ENCODE measurements at regions of chr11 and their contacts with region 1.

Region 1: GRCh38 chr11:14249121-14249963 is 109.6 kb downstream of the RRAS2 start:
- DNase-seq: peak; percentile 42
- H3K4me3 Mint-ChIP-seq: peak overlapping the region; percentile 31
- H3K27ac Mint-ChIP-seq: no peak overlapping the region
- H3K4me1 Mint-ChIP-seq: peaks cover 21% of the 10 kb centered on the region
- H3K27me3 Mint-ChIP-seq: peaks cover 6% of the 10 kb centered on the region

Region 2: DNA sequence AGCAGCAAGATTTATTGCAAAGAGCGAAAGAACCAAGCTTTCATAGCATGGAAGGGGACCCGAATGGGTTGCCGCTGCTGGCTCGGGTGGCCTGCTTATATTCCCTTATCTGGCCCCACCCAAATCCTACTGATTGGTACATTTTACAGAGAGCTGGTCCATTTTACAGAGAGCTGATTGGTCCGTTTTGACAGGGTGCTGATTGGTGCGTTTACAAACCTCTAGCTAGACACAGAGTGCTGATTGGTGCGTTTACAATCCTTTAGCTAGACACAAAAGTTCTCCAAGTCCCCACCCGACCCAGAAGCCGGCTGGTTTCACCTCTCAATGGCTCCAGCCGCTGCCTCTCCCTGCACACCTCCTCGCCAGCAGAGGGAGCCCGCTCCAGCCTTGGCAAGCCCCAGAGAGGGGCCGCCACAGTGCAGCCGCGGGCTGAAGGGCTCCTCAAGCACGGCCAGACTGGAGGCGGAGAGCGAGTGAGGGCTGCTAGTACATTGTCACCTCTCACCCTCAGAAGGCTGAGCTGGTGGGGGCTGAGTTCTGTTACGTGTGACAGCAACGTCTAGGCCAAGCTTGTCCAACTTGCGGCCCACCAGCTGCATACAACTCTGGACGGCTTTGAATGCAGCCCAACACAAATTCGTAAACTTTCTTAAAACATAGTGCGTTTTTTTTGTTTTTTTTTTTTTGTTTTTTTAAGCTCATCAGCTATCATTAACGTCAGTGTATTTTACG is 762.2 kb before region 1 on chr11:
- intact Hi-C with region 1: loop called (anchors 2 kb)
- DNase-seq: peak; percentile 35
- H3K4me3 Mint-ChIP-seq: peak overlapping the region; percentile 72
- H3K27ac Mint-ChIP-seq: no peak overlapping the region
- H3K4me1 Mint-ChIP-seq: peaks cover 9% of the 10 kb centered on the region
- H3K27me3 Mint-ChIP-seq: peaks cover under 1% of the 10 kb centered on the region

Region 3: DNA sequence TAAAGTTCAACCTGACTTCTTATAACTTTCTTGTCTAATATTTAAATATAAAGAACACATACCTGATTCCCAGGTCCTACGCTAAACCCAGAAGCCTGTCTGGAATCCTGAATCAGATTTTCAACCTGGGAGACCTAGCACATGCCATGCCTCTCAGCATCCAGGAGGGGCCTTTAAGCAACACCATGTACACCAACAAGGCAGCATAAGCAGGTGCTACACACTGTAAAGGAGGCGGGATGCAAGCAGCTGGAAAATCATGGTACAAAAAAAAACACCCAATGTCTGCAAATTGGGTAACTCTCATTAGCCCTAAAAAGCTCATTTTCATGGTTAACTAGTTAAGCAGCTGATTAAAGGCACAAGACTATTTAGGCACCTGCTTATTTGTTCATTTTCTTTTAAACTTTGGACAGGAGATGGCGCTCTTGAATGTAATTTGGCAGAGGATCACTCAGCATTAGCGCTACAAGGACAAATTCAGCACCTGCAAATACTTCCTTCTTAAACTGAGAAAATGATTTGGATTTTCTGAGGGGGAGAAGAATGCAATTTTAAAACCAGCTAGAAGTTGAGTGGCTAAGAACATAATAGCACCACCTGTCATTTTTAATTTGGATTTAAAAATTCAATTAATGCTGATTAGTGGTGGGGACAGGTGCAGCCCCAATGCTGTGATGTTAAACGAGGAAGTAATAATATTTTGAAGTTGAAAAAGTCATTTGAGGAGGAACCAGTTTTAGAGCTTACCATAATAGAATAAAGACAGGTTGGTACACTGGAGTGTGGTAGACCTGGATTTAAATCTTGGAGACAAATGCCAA is 476.9 kb before region 1 on chr11:
- intact Hi-C with region 1: loop called (anchors 1 kb)
- DNase-seq: peak; percentile 22
- H3K4me3 Mint-ChIP-seq: no peak overlapping the region
- H3K27ac Mint-ChIP-seq: no peak overlapping the region
- H3K4me1 Mint-ChIP-seq: no peaks in the 10 kb centered on the region
- H3K27me3 Mint-ChIP-seq: peaks cover 14% of the 10 kb centered on the region

Region 4: DNA sequence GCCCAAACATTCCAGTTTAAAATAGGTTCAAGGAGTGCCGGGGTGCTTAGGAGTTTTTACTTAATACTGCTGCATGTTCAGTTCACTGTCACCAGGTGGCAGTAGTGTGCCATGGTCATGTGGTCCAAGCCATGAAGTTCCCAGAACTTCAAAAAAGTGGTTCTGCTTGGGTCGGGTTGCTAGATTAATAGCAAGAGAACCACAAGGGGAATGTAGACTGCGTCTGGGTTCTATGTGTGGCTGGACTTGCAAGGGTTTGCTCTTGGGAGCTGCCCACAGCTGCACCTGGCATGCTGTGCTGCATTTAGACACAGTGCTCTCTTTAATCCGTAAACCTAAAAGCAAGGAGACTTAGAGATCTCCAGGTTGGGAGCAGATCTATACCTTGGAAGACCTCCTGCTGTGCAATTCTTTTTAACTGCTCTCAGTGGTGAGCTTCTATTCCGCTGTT is 293.3 kb before region 1 on chr11:
- intact Hi-C with region 1: loop called (anchors 1 kb)
- DNase-seq: peak; percentile 20
- H3K4me3 Mint-ChIP-seq: no peak overlapping the region
- H3K27ac Mint-ChIP-seq: no peak overlapping the region
- H3K4me1 Mint-ChIP-seq: no peaks in the 10 kb centered on the region
- H3K27me3 Mint-ChIP-seq: peaks cover 39% of the 10 kb centered on the region

Region 5: GRCh38 chr11:14148653-14149273 is 100.6 kb before region 1 on chr11:
- intact Hi-C with region 1: loop called (anchors 2 kb)
- DNase-seq: no peak
- H3K4me3 Mint-ChIP-seq: no peak overlapping the region
- H3K27ac Mint-ChIP-seq: no peak overlapping the region
- H3K4me1 Mint-ChIP-seq: peaks cover 4% of the 10 kb centered on the region
- H3K27me3 Mint-ChIP-seq: peaks cover 10% of the 10 kb centered on the region

Region 6: DNA sequence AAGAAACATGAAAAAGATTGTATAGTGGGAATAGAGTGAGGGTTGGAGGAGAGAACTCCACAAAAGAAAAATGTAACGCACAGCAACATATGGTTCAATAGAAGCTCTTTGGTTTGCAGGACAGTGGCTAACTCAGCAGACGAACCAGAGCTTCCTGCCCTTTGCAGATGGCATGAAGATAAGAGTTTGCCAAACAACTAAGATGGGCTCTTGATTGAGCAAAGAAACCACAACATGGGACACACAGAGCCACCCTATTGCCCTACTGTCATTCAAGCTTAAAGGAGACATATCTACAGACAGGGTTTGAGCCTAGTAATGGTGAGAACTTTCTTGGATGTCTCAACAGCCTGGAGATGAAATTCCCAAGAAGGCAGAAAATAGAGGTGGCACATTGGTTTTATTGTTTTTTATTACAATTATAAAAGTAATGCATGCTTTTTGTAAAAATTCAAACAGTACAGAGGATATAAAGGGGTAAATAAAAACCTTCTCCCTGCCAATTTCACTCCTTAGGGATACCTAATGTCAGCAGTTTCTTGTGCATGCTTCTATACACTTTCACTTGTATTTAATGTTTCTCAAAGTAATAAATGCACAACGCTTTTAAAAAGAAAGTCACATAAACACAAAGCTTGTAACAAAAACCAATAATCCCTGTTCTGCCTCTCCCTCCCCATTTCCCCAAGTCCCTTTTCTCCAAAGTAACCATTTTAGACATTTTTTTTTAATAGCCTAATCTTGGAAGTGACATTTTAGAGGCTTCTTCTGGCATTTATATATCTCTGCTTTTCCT is 186.6 kb after region 1 on chr11:
- intact Hi-C with region 1: no loop called
- DNase-seq: no peak
- H3K4me3 Mint-ChIP-seq: no peak overlapping the region
- H3K27ac Mint-ChIP-seq: peak overlapping the region; percentile 4
- H3K4me1 Mint-ChIP-seq: peaks cover 31% of the 10 kb centered on the region
- H3K27me3 Mint-ChIP-seq: peaks cover 13% of the 10 kb centered on the region

Region 7: DNA sequence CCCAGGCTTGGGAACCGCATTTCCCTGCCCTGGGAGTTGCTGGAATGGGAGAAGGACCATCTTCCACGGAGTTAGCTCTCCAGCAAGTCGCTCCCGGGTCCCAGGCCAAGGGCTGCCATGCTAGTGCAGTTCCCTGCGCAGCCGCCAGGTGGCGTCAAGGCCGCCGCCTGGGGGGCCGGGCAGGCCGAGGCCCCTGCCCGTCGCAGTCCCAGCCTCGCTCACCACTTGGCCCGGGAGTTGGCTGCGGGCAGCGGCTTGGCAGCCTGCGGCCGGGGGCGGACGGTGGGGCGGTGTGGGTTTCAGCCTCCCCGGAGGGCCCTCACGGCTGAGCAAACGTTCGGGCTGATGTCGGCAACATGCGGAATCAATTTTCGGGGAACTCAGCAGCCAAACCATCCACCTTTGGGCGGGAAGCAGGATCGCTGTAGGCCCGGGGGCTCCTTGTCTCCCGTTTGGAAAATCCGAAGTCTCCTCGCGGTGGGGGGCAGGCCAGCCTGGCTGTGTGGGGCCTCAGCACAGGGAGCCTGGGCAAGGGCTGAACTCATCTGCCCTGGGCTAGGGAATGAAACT is 1691.9 kb after region 1 on chr11:
- intact Hi-C with region 1: no loop called
- DNase-seq: peak; percentile 4
- H3K4me3 Mint-ChIP-seq: no peak overlapping the region
- H3K27ac Mint-ChIP-seq: no peak overlapping the region
- H3K4me1 Mint-ChIP-seq: no peaks in the 10 kb centered on the region
- H3K27me3 Mint-ChIP-seq: no peaks in the 10 kb centered on the region